Dorsolateral prefrontal cortex (tissue), 120 donors: ENCODE measurements at regions of chr21 and their contacts with region 1.

Region 1: GRCh38 chr21:32826329-32827167 is 55.0 kb upstream of the PAXBP1 start:
- DNase-seq: peak in 4 of 10 donors; percentile 7 to 57 (median 36)
- H3K4me3 ChIP-seq: no peak overlapping the region
- H3K27ac ChIP-seq: peak overlapping the region in 26 of 59 donors; percentile 9 to 81 (median 62)
- H3K27me3 ChIP-seq: no peaks in the 10 kb centered on the region
- CTCF ChIP-seq: peak; percentile 28 to 82 (median 66)

Region 2: GRCh38 chr21:32371913-32372314 is 454.6 kb before region 1 on chr21:
- intact Hi-C with region 1: no loop called
- DNase-seq: no peak
- H3K4me3 ChIP-seq: no peak overlapping the region
- H3K27ac ChIP-seq: peak overlapping the region in 44 of 59 donors; percentile 4 to 84 (median 53)
- H3K27me3 ChIP-seq: no peaks in the 10 kb centered on the region
- CTCF ChIP-seq: no peak

Region 3: DNA sequence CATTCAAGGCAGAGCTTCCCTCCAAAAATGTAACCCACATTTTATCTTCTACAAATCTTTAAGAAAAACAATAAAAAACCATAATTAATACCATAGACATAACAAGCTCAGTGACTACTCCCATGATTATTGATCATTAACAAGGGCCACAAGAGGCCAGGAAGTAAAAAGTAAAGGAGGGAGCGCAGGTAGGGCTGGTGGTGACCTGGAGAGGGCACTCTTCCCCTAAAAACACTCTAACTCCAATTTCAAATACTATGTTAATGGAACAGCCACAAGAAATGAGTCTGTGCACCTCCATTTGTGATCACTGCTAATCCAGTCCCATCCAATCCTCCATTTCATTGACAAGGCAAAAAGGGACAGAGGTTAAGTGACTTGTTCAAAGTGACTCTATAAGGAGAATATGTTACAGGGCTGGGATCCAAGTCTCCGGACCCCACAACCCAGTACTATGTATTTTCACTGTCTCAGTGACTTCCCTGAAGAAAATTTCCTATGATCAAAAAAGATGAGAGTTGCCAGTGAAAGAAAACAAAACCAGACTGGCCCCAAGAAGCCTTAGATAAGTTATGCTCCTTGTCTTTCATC is 173.1 kb before region 1 on chr21:
- intact Hi-C with region 1: loop called in 1 of 2 experiments (anchors 10 kb)
- DNase-seq: no peak
- H3K4me3 ChIP-seq: no peak overlapping the region
- H3K27ac ChIP-seq: peak overlapping the region in 5 of 59 donors; percentile 6 to 25 (median 19)
- H3K27me3 ChIP-seq: no peaks in the 10 kb centered on the region
- CTCF ChIP-seq: peak in 49 of 56 donors; percentile 10 to 63 (median 38)

Region 4: GRCh38 chr21:32782698-32783097 is 43.9 kb before region 1 on chr21:
- intact Hi-C with region 1: loop called (anchors 2 to 10 kb)
- DNase-seq: no peak
- H3K4me3 ChIP-seq: no peak overlapping the region
- H3K27ac ChIP-seq: peak overlapping the region in 12 of 59 donors; percentile 0 to 65 (median 32)
- H3K27me3 ChIP-seq: no peaks in the 10 kb centered on the region
- CTCF ChIP-seq: peak in 32 of 56 donors; percentile 6 to 62 (median 35)

Region 5: GRCh38 chr21:33101300-33102005 is 274.9 kb after region 1 on chr21:
- intact Hi-C with region 1: no loop called
- DNase-seq: no peak
- H3K4me3 ChIP-seq: no peak overlapping the region
- H3K27ac ChIP-seq: no peak overlapping the region
- H3K27me3 ChIP-seq: peaks cover 0 to 18% (median 0%) of the 10 kb centered on the region in 45 donors
- CTCF ChIP-seq: no peak